Natural killer cell (primary cell): ENCODE measurements at regions of chr12 and their contacts with region 1.

Region 1: DNA sequence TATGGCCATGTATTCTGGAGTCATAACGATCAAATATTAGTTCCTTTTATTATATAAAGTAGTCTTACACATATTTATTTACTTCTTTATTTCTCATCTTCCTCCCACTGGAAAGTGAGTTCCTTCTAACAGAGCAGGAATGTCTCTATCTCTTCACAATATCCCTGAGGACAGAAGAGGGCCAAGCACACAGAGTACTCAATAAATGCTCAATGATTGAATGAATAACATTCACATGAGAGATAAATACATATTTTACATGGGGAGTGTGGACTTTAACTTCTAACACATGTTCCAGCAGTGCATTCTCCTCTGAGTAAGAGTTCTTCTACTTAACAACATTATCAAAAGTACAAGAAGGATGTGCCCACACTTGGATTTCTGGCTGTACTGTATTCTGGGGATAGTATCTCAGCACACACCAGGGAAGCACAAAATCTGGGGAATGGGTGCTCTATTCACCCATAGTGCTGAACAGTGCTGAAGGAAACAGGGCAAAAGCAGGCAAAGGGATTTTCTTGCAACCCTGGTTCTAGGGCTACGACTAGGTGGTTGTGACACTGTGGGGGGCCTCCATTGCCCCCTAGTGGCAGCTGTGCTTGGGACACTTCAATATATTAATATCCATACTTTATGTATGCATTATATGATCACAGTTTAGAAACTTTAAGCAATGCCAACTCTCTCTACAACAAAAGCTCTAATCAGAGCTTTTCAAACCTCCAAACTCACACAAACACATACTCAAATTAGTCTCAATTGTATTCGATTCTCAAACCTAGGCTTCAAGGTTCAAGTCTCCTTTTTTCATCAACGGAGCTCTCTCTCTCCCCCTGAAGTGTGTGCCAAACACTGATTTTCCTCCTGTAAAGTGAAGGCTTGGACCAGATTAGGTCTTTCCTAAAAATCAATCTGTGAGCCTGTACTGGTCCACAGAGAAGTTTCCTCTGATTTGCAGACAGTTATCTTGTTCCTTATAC is 115.5 kb downstream of the SLC2A13 start:
- DNase-seq: peak; percentile 38 to 70
- ATAC-seq: peak; percentile 83 to 96 (median 89)
- H3K4me3 ChIP-seq: no peak overlapping the region
- H3K4me3 Mint-ChIP-seq: no peak overlapping the region
- H3K27ac ChIP-seq: no peak overlapping the region
- H3K27ac Mint-ChIP-seq: no peak overlapping the region
- H3K4me1 ChIP-seq: no peaks in the 10 kb centered on the region
- H3K4me1 Mint-ChIP-seq: peaks cover 0 to 20% of the 10 kb centered on the region in 2 donors
- H3K27me3 ChIP-seq: no peaks in the 10 kb centered on the region
- H3K27me3 Mint-ChIP-seq: no peaks in the 10 kb centered on the region
- CTCF ChIP-seq: peak; percentile 79

Region 2: DNA sequence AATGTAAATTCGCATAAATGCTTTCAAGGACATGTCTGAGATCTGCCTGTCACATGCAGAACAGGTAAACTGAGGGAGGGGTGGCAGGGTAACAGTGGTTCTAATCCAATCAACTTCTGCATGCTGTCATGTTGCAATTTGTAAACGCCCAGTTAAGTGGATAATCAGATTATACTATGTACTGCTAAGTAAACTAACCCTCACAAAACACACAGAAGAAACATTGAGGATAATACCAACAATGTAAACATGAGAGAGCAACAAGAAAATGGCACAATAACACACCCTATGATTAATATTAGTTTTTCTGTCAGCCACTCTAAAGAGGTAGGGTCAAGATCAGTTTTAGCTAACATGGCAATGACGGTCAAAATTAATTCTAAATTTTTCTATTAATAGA is 671.2 kb before region 1 on chr12:
- intact Hi-C with region 1: loop called (anchors 1 kb)
- DNase-seq: no peak
- ATAC-seq: no peak
- H3K4me3 ChIP-seq: no peak overlapping the region
- H3K4me3 Mint-ChIP-seq: no peak overlapping the region
- H3K27ac ChIP-seq: no peak overlapping the region
- H3K27ac Mint-ChIP-seq: no peak overlapping the region
- H3K4me1 ChIP-seq: no peaks in the 10 kb centered on the region
- H3K4me1 Mint-ChIP-seq: peaks cover 0 to 5% of the 10 kb centered on the region in 2 donors
- H3K27me3 ChIP-seq: no peaks in the 10 kb centered on the region
- H3K27me3 Mint-ChIP-seq: no peaks in the 10 kb centered on the region
- CTCF ChIP-seq: no peak

Region 3: GRCh38 chr12:39946361-39946948 is 44.0 kb before region 1 on chr12:
- intact Hi-C with region 1: no loop called
- DNase-seq: no peak
- ATAC-seq: no peak
- H3K4me3 ChIP-seq: no peak overlapping the region
- H3K4me3 Mint-ChIP-seq: no peak overlapping the region
- H3K27ac ChIP-seq: no peak overlapping the region
- H3K27ac Mint-ChIP-seq: no peak overlapping the region
- H3K4me1 ChIP-seq: no peaks in the 10 kb centered on the region
- H3K4me1 Mint-ChIP-seq: no peaks in the 10 kb centered on the region
- H3K27me3 ChIP-seq: no peaks in the 10 kb centered on the region
- H3K27me3 Mint-ChIP-seq: no peaks in the 10 kb centered on the region
- CTCF ChIP-seq: no peak